PC-9 (cell line): ENCODE measurements at regions of chr13 and their contacts with region 1.

Region 1: GRCh38 chr13:61685682-61686012 is 270.0 kb upstream of the PCDH20 start:
- DNase-seq: no peak
- H3K4me3 ChIP-seq: no peak overlapping the region
- H3K27ac ChIP-seq: no peak overlapping the region
- H3K4me1 ChIP-seq: no peaks in the 10 kb centered on the region
- H3K27me3 ChIP-seq: no peaks in the 10 kb centered on the region
- CTCF ChIP-seq: no peak

Region 2: GRCh38 chr13:60661521-60661920 is 1024.1 kb before region 1 on chr13:
- CTCF ChIA-PET with region 1: interaction called, 11 read pairs
- POLR2A ChIA-PET with region 1: no interaction called
- intact Hi-C with region 1: no loop called
- DNase-seq: no peak
- H3K4me3 ChIP-seq: no peak overlapping the region
- H3K27ac ChIP-seq: no peak overlapping the region
- H3K4me1 ChIP-seq: no peaks in the 10 kb centered on the region
- H3K27me3 ChIP-seq: no peaks in the 10 kb centered on the region
- CTCF ChIP-seq: no peak

Region 3: GRCh38 chr13:61294467-61295191 is 391.0 kb before region 1 on chr13:
- CTCF ChIA-PET with region 1: no interaction called
- POLR2A ChIA-PET with region 1: no interaction called
- intact Hi-C with region 1: loop called (anchors 10 kb)
- DNase-seq: no peak
- H3K4me3 ChIP-seq: no peak overlapping the region
- H3K27ac ChIP-seq: no peak overlapping the region
- H3K4me1 ChIP-seq: no peaks in the 10 kb centered on the region
- H3K27me3 ChIP-seq: no peaks in the 10 kb centered on the region
- CTCF ChIP-seq: no peak